ENCODE measurements at regions of chr1 and their contacts with region 1.

Region 1: GRCh38 chr1:20151906-20152598 is 12.9 kb downstream of the PLA2G2F start:
- DNase-seq: peak; percentile 73 to 93 (median 84)

Region 2: GRCh38 chr1:19918057-19918456 is 234.0 kb before region 1 on chr1:
- intact Hi-C with region 1: loop called (anchors 5 kb)
- DNase-seq: peak; percentile 62 to 95 (median 86)

Measured in head of caudate nucleus (tissue), 42 donors.